GM12878 (cell line): ENCODE measurements at regions of chr4 and their contacts with region 1.

Region 1: DNA sequence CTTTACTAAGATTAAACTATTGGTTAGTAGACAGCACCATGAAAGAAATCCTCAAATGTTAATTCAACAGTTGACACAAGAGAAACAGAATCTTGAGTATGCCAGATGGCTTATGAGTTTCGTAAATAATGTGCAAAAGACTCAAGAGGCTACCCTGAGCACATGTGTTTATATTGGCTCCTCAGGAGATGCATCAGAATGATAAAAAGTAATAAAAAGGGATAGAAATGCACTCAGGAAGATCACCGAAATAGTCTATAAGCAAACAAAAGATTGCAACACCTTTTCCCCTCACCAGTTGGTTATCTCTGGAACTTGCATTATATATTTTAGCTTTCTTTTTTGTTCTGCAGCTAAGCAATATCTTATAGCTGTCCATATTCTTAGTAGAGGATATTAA is 84.4 kb downstream of the SCFD2 start:
- DNase-seq: no peak
- ATAC-seq: no peak
- H3K4me3 ChIP-seq: no peak overlapping the region
- H3K27ac ChIP-seq: no peak overlapping the region
- H3K4me1 ChIP-seq: no peaks in the 10 kb centered on the region
- H3K27me3 ChIP-seq: no peaks in the 10 kb centered on the region
- CTCF ChIP-seq: no peak
- EP300 ChIP-seq: no peak
- POLR2A ChIP-seq: no peak
- RAD21 ChIP-seq: no peak

Region 2: DNA sequence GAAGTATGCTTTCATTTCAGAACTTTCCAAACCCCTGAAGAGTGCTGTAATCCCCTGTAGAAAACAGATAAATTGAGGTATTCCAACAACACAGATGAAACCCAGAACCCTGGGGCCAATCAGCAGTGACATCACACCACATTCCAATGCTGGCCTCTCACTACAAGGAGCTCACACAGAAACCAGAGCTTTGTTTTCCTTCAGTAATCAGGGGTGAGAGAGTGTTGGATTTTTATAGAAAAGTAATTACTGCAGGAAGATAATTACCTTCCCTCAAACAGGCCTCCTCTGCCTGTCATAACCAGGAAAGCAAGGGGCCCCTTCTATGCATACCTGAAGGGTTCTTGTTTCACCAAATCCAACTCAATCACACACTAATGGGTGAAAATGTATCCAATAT is 161.8 kb before region 1 on chr4:
- CTCF ChIA-PET with region 1: no interaction called
- POLR2A ChIA-PET with region 1: no interaction called
- RAD21 ChIA-PET with region 1: no interaction called
- SMC1A ChIA-PET with region 1: no interaction called
- in situ Hi-C with region 1: no loop called
- intact Hi-C with region 1: no loop called
- DNase-seq: no peak
- ATAC-seq: no peak
- H3K4me3 ChIP-seq: no peak overlapping the region
- H3K27ac ChIP-seq: no peak overlapping the region
- H3K4me1 ChIP-seq: no peaks in the 10 kb centered on the region
- H3K27me3 ChIP-seq: no peaks in the 10 kb centered on the region
- CTCF ChIP-seq: no peak
- EP300 ChIP-seq: no peak
- POLR2A ChIP-seq: no peak
- RAD21 ChIP-seq: no peak

Region 3: DNA sequence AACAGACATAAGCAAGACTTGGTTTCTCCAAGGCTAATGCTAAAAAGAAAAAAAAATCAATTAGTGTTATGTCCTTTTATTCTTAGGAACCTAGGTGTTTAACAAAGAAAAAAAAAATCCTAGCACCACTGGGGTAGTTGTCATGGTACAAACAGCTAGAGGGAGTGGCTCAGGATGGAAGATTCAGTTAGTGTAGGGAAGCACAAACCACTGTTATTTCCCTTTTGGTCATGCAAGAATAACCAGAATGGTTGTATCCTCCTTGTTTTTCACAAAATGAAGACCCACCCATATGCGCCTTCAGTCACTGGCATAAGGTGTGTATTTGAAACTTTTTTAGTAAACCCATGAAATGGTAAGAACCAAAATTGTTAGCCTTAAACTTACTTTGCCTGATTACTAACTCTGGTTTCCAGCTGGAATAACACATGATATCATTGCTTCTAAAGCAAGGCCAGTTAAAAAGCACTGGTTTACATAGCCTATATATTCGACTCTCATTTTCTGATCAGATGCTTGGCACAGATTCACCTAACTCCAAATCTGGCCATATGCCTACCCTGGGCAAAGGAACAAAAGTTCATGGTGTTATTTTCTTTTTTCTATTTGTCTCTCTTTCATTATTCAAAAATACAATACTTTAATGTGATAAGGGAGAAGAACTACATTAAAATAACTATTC is 48.2 kb before region 1 on chr4:
- CTCF ChIA-PET with region 1: no interaction called
- POLR2A ChIA-PET with region 1: no interaction called
- RAD21 ChIA-PET with region 1: no interaction called
- SMC1A ChIA-PET with region 1: no interaction called
- in situ Hi-C with region 1: no loop called
- intact Hi-C with region 1: loop called (anchors 10 kb)
- DNase-seq: no peak
- ATAC-seq: no peak
- H3K4me3 ChIP-seq: no peak overlapping the region
- H3K27ac ChIP-seq: no peak overlapping the region
- H3K4me1 ChIP-seq: peaks cover 7% of the 10 kb centered on the region; the same call in 1 of the 2 replicates
- H3K27me3 ChIP-seq: no peaks in the 10 kb centered on the region
- CTCF ChIP-seq: no peak
- EP300 ChIP-seq: no peak
- POLR2A ChIP-seq: no peak
- RAD21 ChIP-seq: no peak